T-cell (primary cell): ENCODE measurements at regions of chr4 and their contacts with region 1.

Region 1: DNA sequence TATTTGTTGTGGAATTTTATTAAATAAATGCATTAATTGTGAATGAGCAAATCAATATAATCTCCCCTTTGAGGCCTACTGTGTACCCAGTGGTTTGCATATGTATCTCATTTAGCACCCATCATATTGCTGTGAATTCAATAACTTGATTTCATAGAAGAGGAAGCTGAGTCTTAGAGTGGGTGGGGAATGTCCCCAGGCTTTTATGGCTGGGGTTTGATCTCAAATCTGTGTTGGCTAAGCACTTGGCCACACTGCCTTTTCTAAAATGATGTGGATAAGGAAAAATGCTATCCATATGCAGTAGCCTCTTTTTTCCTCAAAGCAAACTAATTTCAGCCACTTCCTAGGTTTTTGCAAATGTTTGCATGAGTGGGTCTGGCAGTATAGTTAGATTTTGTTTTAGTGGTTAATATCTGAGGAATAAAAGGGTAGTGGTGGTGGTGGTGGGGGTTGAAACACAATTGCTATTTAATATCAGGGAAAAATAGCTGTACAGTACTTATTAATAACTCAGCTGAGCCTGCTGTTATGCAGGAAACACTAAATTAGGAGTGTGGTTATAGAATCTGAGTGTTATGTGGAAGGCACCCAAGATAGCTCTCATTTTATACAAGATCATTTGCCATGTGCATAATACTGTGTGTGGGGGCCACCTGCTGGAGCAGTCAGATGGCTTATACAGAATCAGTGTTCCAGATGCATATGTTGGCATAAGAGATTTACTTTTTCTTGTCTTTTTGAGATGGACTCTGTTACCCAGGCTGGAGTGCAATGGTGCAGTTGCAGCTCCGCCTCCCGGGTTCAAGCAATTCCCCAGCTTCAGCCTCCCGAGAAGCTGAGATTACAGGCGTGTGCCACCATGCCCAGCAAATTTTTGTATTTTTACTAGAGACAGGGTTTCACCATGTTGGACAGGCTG is 108.0 kb downstream of the TMEM131L start:
- DNase-seq: peak; percentile 43 to 81 (median 68)
- ATAC-seq: peak; percentile 92 to 95 (median 94)
- H3K4me3 ChIP-seq: no peak overlapping the region
- H3K4me3 Mint-ChIP-seq: peak overlapping the region in 1 of 3 donors; percentile 40
- H3K27ac ChIP-seq: peak overlapping the region; percentile 25
- H3K27ac Mint-ChIP-seq: peak overlapping the region; percentile 78 to 85
- H3K4me1 ChIP-seq: peaks cover 30 to 32% of the 10 kb centered on the region in 2 experiments
- H3K4me1 Mint-ChIP-seq: peaks cover 70 to 72% (median 71%) of the 10 kb centered on the region in 3 donors
- H3K27me3 ChIP-seq: no peaks in the 10 kb centered on the region
- H3K27me3 Mint-ChIP-seq: no peaks in the 10 kb centered on the region

Region 2: DNA sequence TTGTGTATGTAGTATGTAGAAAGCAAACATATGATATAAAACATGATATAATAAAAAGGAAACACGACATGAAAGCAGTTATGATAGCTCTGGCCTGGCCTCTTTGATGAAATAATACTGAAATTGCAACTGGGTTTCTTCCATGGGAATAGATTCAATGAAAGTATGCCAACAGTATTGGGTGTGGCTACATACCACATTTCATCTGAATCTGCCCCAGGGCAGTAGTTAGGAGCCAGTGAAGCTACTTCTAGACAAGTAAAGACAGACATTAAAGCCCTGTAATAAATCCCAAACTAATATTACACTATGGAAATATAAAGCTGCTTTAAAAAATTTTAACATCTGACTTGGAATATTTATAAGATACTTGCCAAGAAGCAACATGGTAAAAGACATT is 1245.5 kb before region 1 on chr4:
- CTCF ChIA-PET with region 1: no interaction called
- POLR2A ChIA-PET with region 1: no interaction called
- DNase-seq: no peak
- ATAC-seq: no peak
- H3K4me3 ChIP-seq: no peak overlapping the region
- H3K4me3 Mint-ChIP-seq: no peak overlapping the region
- H3K27ac ChIP-seq: no peak overlapping the region
- H3K27ac Mint-ChIP-seq: peak overlapping the region in 1 of 2 donors; percentile 73
- H3K4me1 ChIP-seq: peaks cover 0 to 3% of the 10 kb centered on the region in 2 experiments
- H3K4me1 Mint-ChIP-seq: peaks cover 20 to 24% (median 21%) of the 10 kb centered on the region in 3 donors
- H3K27me3 ChIP-seq: no peaks in the 10 kb centered on the region
- H3K27me3 Mint-ChIP-seq: no peaks in the 10 kb centered on the region

Region 3: GRCh38 chr4:153344131-153345010 is 229.8 kb before region 1 on chr4 and contains the start of gene MND1:
- CTCF ChIA-PET with region 1: interaction called, 25 to 57 read pairs
- POLR2A ChIA-PET with region 1: no interaction called
- DNase-seq: peak; percentile 69 to 93 (median 86)
- ATAC-seq: peak; percentile 90 to 95 (median 92)
- H3K4me3 ChIP-seq: peak within 1 kb of the TSS; percentile 82 to 95
- H3K4me3 Mint-ChIP-seq: peak within 1 kb of the TSS; percentile 84 to 95 (median 92)
- H3K27ac ChIP-seq: no peak within 1 kb of the TSS
- H3K27ac Mint-ChIP-seq: peak within 1 kb of the TSS; percentile 49 to 50
- H3K4me1 ChIP-seq: peaks cover 6 to 11% of the 10 kb centered on the region in 2 experiments
- H3K4me1 Mint-ChIP-seq: peaks cover 9 to 30% (median 15%) of the 10 kb centered on the region in 3 donors
- H3K27me3 ChIP-seq: no peaks in the 10 kb centered on the region
- H3K27me3 Mint-ChIP-seq: peaks cover 0 to 7% of the 10 kb centered on the region in 2 donors
- total RNA-seq, gene MND1: 0.53 to 1.1 (median 0.70) TPM in 3 of 5 donors, not detected in the others

Region 4: GRCh38 chr4:153426207-153426885 is 147.8 kb before region 1 on chr4:
- CTCF ChIA-PET with region 1: interaction called, 15 to 17 read pairs
- POLR2A ChIA-PET with region 1: no interaction called
- DNase-seq: peak in 13 of 35 experiments; percentile 7 to 71 (median 19)
- ATAC-seq: peak; percentile 75 to 93 (median 84)
- H3K4me3 ChIP-seq: peak overlapping the region in 1 of 2 donors; percentile 15
- H3K4me3 Mint-ChIP-seq: peak overlapping the region; percentile 28 to 65 (median 49)
- H3K27ac ChIP-seq: peak overlapping the region; percentile 85
- H3K27ac Mint-ChIP-seq: peak overlapping the region; percentile 87 to 95
- H3K4me1 ChIP-seq: peaks cover 41 to 49% of the 10 kb centered on the region in 2 experiments
- H3K4me1 Mint-ChIP-seq: peaks cover 53 to 63% (median 59%) of the 10 kb centered on the region in 3 donors
- H3K27me3 ChIP-seq: no peaks in the 10 kb centered on the region
- H3K27me3 Mint-ChIP-seq: no peaks in the 10 kb centered on the region

Region 5: DNA sequence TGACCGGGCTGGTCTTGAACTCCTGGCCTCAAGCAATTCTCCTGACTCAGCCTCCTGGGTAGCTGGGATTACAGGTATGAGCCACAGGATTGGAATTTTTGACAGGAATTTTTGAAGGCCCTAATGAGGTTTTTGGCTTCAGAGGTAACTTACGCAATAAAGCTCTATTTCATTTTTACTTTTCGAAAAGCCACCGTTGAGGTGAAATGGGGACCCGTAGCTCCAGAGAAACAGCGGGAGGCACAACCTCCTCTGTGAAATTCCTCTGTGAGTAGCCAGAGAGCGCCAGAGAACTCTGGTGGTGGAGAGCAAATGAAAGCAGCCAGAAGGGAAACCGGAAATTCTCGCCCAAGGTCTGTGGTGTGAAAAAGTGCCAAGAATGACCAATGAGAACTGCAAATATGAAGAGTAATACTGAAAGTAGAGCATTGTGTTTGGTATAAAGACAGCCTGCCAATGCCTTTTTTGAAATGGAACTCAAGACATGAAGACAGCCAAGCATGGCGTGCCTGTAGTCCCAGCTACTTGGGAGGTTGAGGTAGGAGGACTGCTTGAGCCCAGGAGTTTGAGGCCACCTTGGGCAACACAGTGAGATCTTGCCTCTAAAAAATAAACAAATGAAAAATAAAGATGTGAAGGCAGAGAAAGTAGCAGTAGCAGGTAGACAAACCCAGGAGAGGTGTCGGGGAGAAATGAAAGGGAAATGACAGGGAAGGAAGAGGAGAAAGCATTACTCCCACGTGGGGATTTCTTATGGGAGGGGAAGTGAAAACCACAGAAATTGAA is 141.0 kb before region 1 on chr4:
- CTCF ChIA-PET with region 1: interaction called, 17 to 33 read pairs
- POLR2A ChIA-PET with region 1: no interaction called
- DNase-seq: peak; percentile 13 to 83 (median 54)
- ATAC-seq: peak; percentile 67 to 82 (median 74)
- H3K4me3 ChIP-seq: peak overlapping the region; percentile 17 to 40
- H3K4me3 Mint-ChIP-seq: peak overlapping the region; percentile 79 to 85 (median 81)
- H3K27ac ChIP-seq: peak overlapping the region; percentile 69
- H3K27ac Mint-ChIP-seq: peak overlapping the region; percentile 95 to 99
- H3K4me1 ChIP-seq: peaks cover 37 to 40% of the 10 kb centered on the region in 2 experiments
- H3K4me1 Mint-ChIP-seq: peaks cover 61 to 71% (median 63%) of the 10 kb centered on the region in 3 donors
- H3K27me3 ChIP-seq: no peaks in the 10 kb centered on the region
- H3K27me3 Mint-ChIP-seq: no peaks in the 10 kb centered on the region

Region 6: GRCh38 chr4:153466081-153466948 is 107.8 kb before region 1 on chr4 and contains the start of gene TMEM131L:
- CTCF ChIA-PET with region 1: interaction called, 8 to 24 read pairs
- POLR2A ChIA-PET with region 1: no interaction called
- DNase-seq: peak; percentile 47 to 90 (median 65)
- ATAC-seq: peak; percentile 80 to 83 (median 83)
- H3K4me3 ChIP-seq: peak within 1 kb of the TSS; percentile 95 to 97
- H3K4me3 Mint-ChIP-seq: peak within 1 kb of the TSS; percentile 94 to 96 (median 94)
- H3K27ac ChIP-seq: peak within 1 kb of the TSS; percentile 88
- H3K27ac Mint-ChIP-seq: peak within 1 kb of the TSS; percentile 92 to 97
- H3K4me1 ChIP-seq: peaks cover 29 to 30% of the 10 kb centered on the region in 2 experiments
- H3K4me1 Mint-ChIP-seq: peaks cover 37 to 45% (median 43%) of the 10 kb centered on the region in 3 donors
- H3K27me3 ChIP-seq: no peaks in the 10 kb centered on the region
- H3K27me3 Mint-ChIP-seq: no peaks in the 10 kb centered on the region
- total RNA-seq, gene TMEM131L: 60.7 to 115 (median 72.6) TPM

Region 7: GRCh38 chr4:153488006-153488891 is 85.9 kb before region 1 on chr4:
- CTCF ChIA-PET with region 1: interaction called, 6 to 11 read pairs
- POLR2A ChIA-PET with region 1: no interaction called
- DNase-seq: peak; percentile 42 to 90 (median 81)
- ATAC-seq: peak; percentile 66 to 86 (median 67)
- H3K4me3 ChIP-seq: peak overlapping the region; percentile 51 to 70
- H3K4me3 Mint-ChIP-seq: peak overlapping the region; percentile 75 to 79 (median 76)
- H3K27ac ChIP-seq: peak overlapping the region; percentile 95
- H3K27ac Mint-ChIP-seq: peak overlapping the region; percentile 96 to 98
- H3K4me1 ChIP-seq: peaks cover 64 to 68% of the 10 kb centered on the region in 2 experiments
- H3K4me1 Mint-ChIP-seq: peaks cover 87 to 89% (median 88%) of the 10 kb centered on the region in 3 donors
- H3K27me3 ChIP-seq: no peaks in the 10 kb centered on the region
- H3K27me3 Mint-ChIP-seq: no peaks in the 10 kb centered on the region

Region 8: GRCh38 chr4:153791746-153792617 is 217.8 kb after region 1 on chr4:
- CTCF ChIA-PET with region 1: no interaction called
- POLR2A ChIA-PET with region 1: no interaction called
- DNase-seq: peak in 5 of 35 experiments; percentile 15 to 32 (median 18)
- ATAC-seq: peak in 1 of 4 experiments; percentile 16
- H3K4me3 ChIP-seq: peak overlapping the region; percentile 20 to 74
- H3K4me3 Mint-ChIP-seq: peak overlapping the region; percentile 67 to 88 (median 71)
- H3K27ac ChIP-seq: no peak overlapping the region
- H3K27ac Mint-ChIP-seq: no peak overlapping the region
- H3K4me1 ChIP-seq: peaks cover 12 to 50% of the 10 kb centered on the region in 2 experiments
- H3K4me1 Mint-ChIP-seq: peaks cover 44 to 48% (median 46%) of the 10 kb centered on the region in 3 donors
- H3K27me3 ChIP-seq: peaks cover 27 to 56% of the 10 kb centered on the region in 2 experiments
- H3K27me3 Mint-ChIP-seq: peaks cover 70 to 83% of the 10 kb centered on the region in 2 donors